Dendritic cell treated with granulocyte-macrophage colony-stimulating factor and Interleukin-4, amounts not matched to agents 40 ng/mL and 50 ng/mL, for 4 days (primary cell): ENCODE measurements at regions of chr10 and their contacts with region 1.

Region 1: GRCh38 chr10:89426230-89426868 is 12.0 kb downstream of the IFIT5 start:
- H3K4me3 Mint-ChIP-seq: no peak overlapping the region
- H3K27ac Mint-ChIP-seq: no peak overlapping the region
- H3K4me1 Mint-ChIP-seq: no peaks in the 10 kb centered on the region
- H3K27me3 Mint-ChIP-seq: no peaks in the 10 kb centered on the region

Region 2: DNA sequence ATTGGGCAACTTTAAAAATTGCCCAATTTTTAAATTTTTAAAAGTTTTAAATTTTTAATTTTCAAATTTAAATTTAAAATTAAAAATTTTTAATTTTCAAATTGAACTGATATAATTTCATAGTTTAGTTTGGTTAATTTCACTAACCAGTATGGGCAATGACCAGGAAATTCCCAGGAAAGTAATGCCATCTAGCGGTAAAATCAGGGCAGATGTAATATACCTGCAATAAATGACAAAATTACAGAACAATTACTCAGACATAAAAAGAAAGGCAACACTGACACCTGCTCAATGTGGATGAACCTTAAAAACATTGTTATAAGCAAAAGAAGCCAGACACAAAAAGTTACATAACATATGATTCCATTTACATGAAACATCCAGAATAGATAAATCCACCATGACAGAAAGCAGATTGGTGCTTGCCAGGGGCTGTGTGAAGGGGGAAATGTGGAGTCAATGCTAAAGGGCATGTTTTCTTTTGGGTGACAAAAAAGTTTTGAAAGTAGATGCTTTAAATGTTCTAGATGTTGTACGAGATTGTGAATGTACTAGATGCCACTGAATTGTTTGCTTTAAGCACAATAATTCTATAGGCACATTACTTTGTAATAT is 137.6 kb after region 1 on chr10:
- intact Hi-C with region 1: loop called (anchors 1 kb)
- H3K4me3 Mint-ChIP-seq: no peak overlapping the region
- H3K27ac Mint-ChIP-seq: no peak overlapping the region
- H3K4me1 Mint-ChIP-seq: no peaks in the 10 kb centered on the region
- H3K27me3 Mint-ChIP-seq: peaks cover 13% of the 10 kb centered on the region

Region 3: GRCh38 chr10:89701238-89702120 is 275.1 kb after region 1 on chr10 and contains the start of gene KIF20B:
- intact Hi-C with region 1: loop called (anchors 10 kb)
- H3K4me3 Mint-ChIP-seq: peak within 1 kb of the TSS; percentile 90
- H3K27ac Mint-ChIP-seq: peak within 1 kb of the TSS; percentile 95
- H3K4me1 Mint-ChIP-seq: peaks cover 28% of the 10 kb centered on the region
- H3K27me3 Mint-ChIP-seq: no peaks in the 10 kb centered on the region

Region 4: GRCh38 chr10:90857635-90858460 is 1431.5 kb after region 1 on chr10 and contains the start of gene HTR7:
- intact Hi-C with region 1: loop called (anchors 10 kb)
- H3K4me3 Mint-ChIP-seq: peak within 1 kb of the TSS; percentile 94
- H3K27ac Mint-ChIP-seq: peak within 1 kb of the TSS; percentile 89
- H3K4me1 Mint-ChIP-seq: peaks cover 12% of the 10 kb centered on the region
- H3K27me3 Mint-ChIP-seq: peaks cover 28% of the 10 kb centered on the region